Endothelial cell of umbilical vein (primary cell): ENCODE measurements at regions of chr6 and their contacts with region 1.

Region 1: DNA sequence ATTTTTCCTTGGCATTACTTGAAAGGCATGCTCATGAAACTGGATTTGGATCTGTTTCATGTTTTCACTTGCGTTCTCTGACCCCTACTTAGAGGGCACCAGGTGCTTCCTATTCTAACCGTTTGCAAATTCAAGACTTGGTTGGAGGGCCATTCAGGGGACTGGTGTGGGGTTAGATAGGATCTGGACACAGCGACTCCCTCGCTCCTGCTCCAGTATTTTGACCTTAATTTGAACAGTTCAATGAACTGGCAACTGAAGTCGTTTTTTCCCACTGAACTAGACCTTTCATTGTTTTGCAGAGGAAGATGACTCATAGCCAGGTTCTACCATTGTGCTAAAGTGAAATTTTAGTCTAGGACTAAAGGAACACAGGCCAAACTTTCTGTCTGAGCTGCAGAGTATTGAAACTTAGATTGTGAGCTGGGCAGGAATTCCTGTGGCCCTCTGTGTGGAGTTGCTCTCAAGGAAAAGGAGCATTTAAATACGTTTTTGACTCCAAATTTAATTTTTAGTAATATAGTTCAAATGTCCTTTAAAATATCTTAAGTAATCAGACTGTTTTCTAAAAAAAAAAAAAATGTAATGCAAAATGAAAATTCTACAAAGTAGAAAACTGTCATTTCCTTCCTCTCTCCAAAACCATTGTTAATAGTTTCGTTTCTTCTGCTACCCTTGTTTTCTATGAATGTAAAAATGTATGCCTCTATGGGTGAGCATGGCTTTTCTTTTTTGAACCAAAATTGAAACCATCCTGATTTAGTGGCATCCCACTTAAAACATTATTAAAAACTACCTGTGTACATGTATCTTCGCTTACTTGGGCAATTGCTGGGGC is 64.8 kb downstream of the UTRN start:
- DNase-seq: peak; percentile 100
- H3K4me3 ChIP-seq: peak overlapping the region in 2 of 3 experiments; percentile 28 to 74
- H3K27ac ChIP-seq: peak overlapping the region; percentile 90
- H3K4me1 ChIP-seq: peaks cover 69% of the 10 kb centered on the region
- H3K27me3 ChIP-seq: no peaks in the 10 kb centered on the region
- CTCF ChIP-seq: no peak
- POLR2A ChIP-seq: peak; percentile 61

Region 2: GRCh38 chr6:144158133-144158532 is 191.8 kb before region 1 on chr6:
- CTCF ChIA-PET with region 1: no interaction called
- POLR2A ChIA-PET with region 1: no interaction called
- dilution Hi-C with region 1: no loop called
- intact Hi-C with region 1: loop called (anchors 5 kb)
- DNase-seq: peak; percentile 79
- H3K4me3 ChIP-seq: no peak overlapping the region
- H3K27ac ChIP-seq: peak overlapping the region; percentile 93
- H3K4me1 ChIP-seq: peaks cover 32% of the 10 kb centered on the region
- H3K27me3 ChIP-seq: no peaks in the 10 kb centered on the region
- CTCF ChIP-seq: no peak
- POLR2A ChIP-seq: no peak

Region 3: DNA sequence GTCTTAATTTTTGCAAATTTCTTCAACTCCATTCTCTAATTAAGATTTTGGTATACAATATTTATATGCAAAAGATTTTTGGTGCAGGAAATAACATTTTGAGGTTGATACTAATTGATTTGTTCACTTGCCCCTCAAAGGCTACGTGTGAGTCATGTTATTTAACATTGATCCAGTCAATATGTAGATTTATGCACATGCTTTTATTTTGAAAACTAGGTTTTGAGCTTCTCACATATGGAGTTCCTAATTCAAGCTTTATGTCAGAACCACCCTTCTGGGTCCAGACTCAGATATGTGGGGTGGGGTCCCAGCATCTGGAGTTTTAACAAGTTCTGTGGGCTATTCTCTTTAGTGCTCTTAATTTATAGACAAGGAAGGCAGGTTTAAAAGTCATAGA is 51.0 kb before region 1 on chr6:
- CTCF ChIA-PET with region 1: no interaction called
- POLR2A ChIA-PET with region 1: no interaction called
- dilution Hi-C with region 1: no loop called
- intact Hi-C with region 1: no loop called
- DNase-seq: no peak
- H3K4me3 ChIP-seq: no peak overlapping the region
- H3K27ac ChIP-seq: no peak overlapping the region
- H3K4me1 ChIP-seq: peaks cover 9% of the 10 kb centered on the region
- H3K27me3 ChIP-seq: no peaks in the 10 kb centered on the region
- CTCF ChIP-seq: no peak
- POLR2A ChIP-seq: no peak

Region 4: GRCh38 chr6:144314003-144314485 is 35.9 kb before region 1 on chr6:
- CTCF ChIA-PET with region 1: interaction called, 9 read pairs
- POLR2A ChIA-PET with region 1: no interaction called
- dilution Hi-C with region 1: no loop called
- intact Hi-C with region 1: loop called (anchors 1 kb)
- DNase-seq: peak; percentile 90
- H3K4me3 ChIP-seq: no peak overlapping the region
- H3K27ac ChIP-seq: peak overlapping the region; percentile 6
- H3K4me1 ChIP-seq: peaks cover 49% of the 10 kb centered on the region
- H3K27me3 ChIP-seq: no peaks in the 10 kb centered on the region
- CTCF ChIP-seq: no peak
- POLR2A ChIP-seq: no peak

Region 5: GRCh38 chr6:144362042-144363018 is 12.4 kb after region 1 on chr6:
- CTCF ChIA-PET with region 1: interaction called, 3 read pairs
- POLR2A ChIA-PET with region 1: interaction called, 3 read pairs
- dilution Hi-C with region 1: no loop called
- intact Hi-C with region 1: loop called (anchors 1 kb)
- DNase-seq: peak; percentile 96
- H3K4me3 ChIP-seq: no peak overlapping the region
- H3K27ac ChIP-seq: peak overlapping the region; percentile 10
- H3K4me1 ChIP-seq: peaks cover 17% of the 10 kb centered on the region
- H3K27me3 ChIP-seq: no peaks in the 10 kb centered on the region
- CTCF ChIP-seq: no peak
- POLR2A ChIP-seq: no peak

Region 6: GRCh38 chr6:144415014-144415413 is 65.1 kb after region 1 on chr6:
- CTCF ChIA-PET with region 1: no interaction called
- POLR2A ChIA-PET with region 1: no interaction called
- dilution Hi-C with region 1: no loop called
- intact Hi-C with region 1: loop called (anchors 1 kb)
- DNase-seq: peak; percentile 48
- H3K4me3 ChIP-seq: no peak overlapping the region
- H3K27ac ChIP-seq: peak overlapping the region; percentile 73
- H3K4me1 ChIP-seq: peaks cover 25% of the 10 kb centered on the region
- H3K27me3 ChIP-seq: no peaks in the 10 kb centered on the region
- CTCF ChIP-seq: no peak
- POLR2A ChIP-seq: no peak

Region 7: DNA sequence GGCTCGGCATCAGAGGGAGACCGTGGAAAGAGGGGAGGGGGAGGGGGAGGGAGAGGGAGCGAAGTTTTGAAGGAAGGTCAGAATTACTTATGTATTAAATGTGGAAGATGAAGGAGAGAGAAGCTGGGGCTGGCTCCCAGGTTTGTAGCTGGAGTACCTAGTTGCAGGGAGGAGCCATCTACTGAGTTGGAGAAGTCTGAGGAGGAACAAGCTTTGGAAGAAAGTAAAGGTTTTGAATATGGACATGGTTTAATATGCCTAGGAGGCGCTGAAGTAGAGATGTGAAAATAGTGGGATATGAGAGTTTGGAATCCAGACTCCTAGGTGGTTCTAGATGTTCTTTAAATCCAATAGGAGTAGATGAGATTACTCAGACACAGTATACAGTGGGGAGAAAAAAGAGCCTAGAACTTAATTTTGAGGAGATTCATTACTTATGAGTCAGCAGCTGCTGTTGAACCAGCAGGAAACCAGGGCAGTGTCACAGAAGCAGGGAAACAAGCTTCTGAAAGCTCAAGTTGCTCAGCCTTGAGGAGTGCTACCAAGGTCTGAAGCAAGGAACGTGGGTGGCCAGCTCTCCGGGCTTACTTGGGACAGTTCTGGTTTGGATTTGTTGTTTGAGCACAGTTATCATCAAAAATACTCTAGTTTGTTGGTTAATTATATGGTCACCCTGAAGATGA is 84.5 kb after region 1 on chr6:
- CTCF ChIA-PET with region 1: interaction called, 5 read pairs
- POLR2A ChIA-PET with region 1: no interaction called
- dilution Hi-C with region 1: no loop called
- intact Hi-C with region 1: loop called (anchors 1 kb)
- DNase-seq: peak; percentile 89
- H3K4me3 ChIP-seq: no peak overlapping the region
- H3K27ac ChIP-seq: peak overlapping the region; percentile 43
- H3K4me1 ChIP-seq: peaks cover 14% of the 10 kb centered on the region
- H3K27me3 ChIP-seq: no peaks in the 10 kb centered on the region
- CTCF ChIP-seq: no peak
- POLR2A ChIP-seq: no peak